ENCODE measurements at regions of chr12 and their contacts with region 1.

Region 1: DNA sequence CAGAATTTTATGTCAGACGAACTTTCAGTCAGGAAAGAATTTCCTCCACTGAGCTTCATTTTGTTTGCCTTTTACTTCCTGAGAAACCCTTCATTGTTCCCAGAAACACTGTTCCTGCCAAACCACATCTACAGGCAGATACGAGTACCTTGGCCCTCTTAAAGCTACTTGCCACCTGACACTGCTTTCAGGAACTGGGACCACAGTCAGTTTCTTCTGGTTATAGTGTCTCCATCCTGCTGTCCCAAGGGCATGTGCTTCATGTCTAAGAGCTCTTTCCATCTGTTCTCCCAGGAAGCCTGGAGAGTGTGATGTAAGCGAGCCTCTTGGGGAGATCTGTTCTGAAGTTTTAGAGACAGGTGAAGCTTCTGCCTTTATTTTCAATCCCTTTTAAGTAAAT is 161.7 kb upstream of the PLEKHA5 start:
- DNase-seq: no peak
- ATAC-seq: no peak
- H3K4me3 ChIP-seq: no peak overlapping the region
- H3K27ac ChIP-seq: no peak overlapping the region
- H3K4me1 ChIP-seq: no peaks in the 10 kb centered on the region
- H3K27me3 ChIP-seq: no peaks in the 10 kb centered on the region
- CTCF ChIP-seq: no peak
- POLR2A ChIP-seq: no peak
- RAD21 ChIP-seq: no peak

Region 2: DNA sequence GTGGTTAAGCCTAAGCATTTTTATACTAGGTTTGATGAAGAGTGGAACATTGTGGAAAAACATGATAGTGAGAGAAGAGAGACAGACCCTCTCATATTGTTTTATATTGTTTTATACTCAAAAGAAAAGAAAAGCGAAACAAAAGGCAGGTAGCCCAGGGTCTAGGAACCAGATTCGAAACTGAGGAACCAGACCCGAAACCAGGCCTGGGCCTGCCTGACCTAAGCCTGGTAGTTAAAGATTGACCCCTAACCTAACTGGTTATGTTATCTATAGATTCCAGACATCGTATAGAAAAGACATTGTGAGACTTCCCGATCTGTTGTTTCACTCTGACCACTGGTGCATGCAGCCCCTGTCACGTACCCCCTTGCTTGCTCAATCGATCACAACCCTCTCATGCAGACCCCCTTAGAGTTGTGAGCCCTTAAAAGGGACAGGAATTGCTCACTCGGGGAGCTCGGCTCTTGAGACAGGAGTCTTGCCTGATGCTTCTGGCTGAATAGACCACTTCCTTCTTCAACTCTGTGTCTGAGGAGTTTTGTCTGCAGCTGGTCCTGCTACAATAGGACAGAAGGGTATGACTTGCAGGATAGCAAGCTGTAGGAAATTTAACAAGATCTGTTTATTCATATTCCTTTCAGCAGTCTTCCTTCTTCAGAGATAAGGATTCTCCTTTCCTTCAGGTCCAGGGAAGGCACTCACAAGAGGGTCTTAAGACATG is 14.6 kb after region 1 on chr12:
- CTCF ChIA-PET with region 1: no interaction called
- POLR2A ChIA-PET with region 1: interaction called, 12 read pairs
- dilution Hi-C with region 1: no loop called
- in situ Hi-C with region 1: no loop called
- intact Hi-C with region 1: no loop called
- DNase-seq: no peak
- ATAC-seq: no peak
- H3K4me3 ChIP-seq: no peak overlapping the region
- H3K27ac ChIP-seq: no peak overlapping the region
- H3K4me1 ChIP-seq: no peaks in the 10 kb centered on the region
- H3K27me3 ChIP-seq: no peaks in the 10 kb centered on the region
- CTCF ChIP-seq: no peak
- POLR2A ChIP-seq: no peak
- RAD21 ChIP-seq: no peak

Region 3: GRCh38 chr12:19010087-19010486 is 42.3 kb after region 1 on chr12:
- CTCF ChIA-PET with region 1: no interaction called
- POLR2A ChIA-PET with region 1: no interaction called
- dilution Hi-C with region 1: no loop called
- in situ Hi-C with region 1: no loop called
- intact Hi-C with region 1: no loop called
- DNase-seq: no peak
- ATAC-seq: no peak
- H3K4me3 ChIP-seq: no peak overlapping the region
- H3K27ac ChIP-seq: no peak overlapping the region
- H3K4me1 ChIP-seq: peaks cover 2% of the 10 kb centered on the region; the same call in 1 of the 2 replicates
- H3K27me3 ChIP-seq: no peaks in the 10 kb centered on the region
- CTCF ChIP-seq: no peak
- POLR2A ChIP-seq: no peak
- RAD21 ChIP-seq: no peak

Measured in IMR-90 (cell line).